ENCODE measurements at regions of chr12 and their contacts with region 1.

Region 1: GRCh38 chr12:31406345-31406744 is 80.4 kb upstream of the SINHCAF start:
- DNase-seq: no peak
- H3K4me3 ChIP-seq: no peak overlapping the region
- H3K27ac ChIP-seq: no peak overlapping the region
- H3K4me1 ChIP-seq: no peaks in the 10 kb centered on the region
- H3K27me3 ChIP-seq: no peaks in the 10 kb centered on the region
- CTCF ChIP-seq: no peak
- EP300 ChIP-seq: no peak
- RAD21 ChIP-seq: no peak

Region 2: DNA sequence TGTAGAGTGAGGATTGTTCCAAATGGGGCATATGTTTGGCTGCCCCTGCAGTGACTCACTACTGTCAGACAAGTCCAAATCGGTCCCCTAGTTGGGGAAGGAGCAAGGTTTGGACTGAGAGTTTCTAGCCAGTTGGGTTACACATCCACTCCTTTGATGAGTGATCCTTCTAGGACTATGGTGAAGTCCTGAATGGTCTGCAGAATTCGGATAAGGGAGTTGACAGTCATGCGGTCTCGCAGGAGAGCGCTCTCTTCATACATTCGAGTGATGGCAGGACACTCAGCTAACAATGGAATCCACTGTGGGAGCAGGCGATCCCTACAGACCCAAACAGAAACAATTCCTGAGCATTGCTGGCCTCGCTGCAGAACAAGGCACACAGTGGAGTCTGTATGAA is 18.9 kb before region 1 on chr12:
- CTCF ChIA-PET with region 1: interaction called, 10 read pairs
- POLR2A ChIA-PET with region 1: no interaction called
- DNase-seq: no peak
- H3K4me3 ChIP-seq: no peak overlapping the region
- H3K27ac ChIP-seq: no peak overlapping the region; a peak in 1 of 4 replicates
- H3K4me1 ChIP-seq: no peaks in the 10 kb centered on the region
- H3K27me3 ChIP-seq: no peaks in the 10 kb centered on the region
- CTCF ChIP-seq: no peak
- EP300 ChIP-seq: no peak
- RAD21 ChIP-seq: no peak

Region 3: DNA sequence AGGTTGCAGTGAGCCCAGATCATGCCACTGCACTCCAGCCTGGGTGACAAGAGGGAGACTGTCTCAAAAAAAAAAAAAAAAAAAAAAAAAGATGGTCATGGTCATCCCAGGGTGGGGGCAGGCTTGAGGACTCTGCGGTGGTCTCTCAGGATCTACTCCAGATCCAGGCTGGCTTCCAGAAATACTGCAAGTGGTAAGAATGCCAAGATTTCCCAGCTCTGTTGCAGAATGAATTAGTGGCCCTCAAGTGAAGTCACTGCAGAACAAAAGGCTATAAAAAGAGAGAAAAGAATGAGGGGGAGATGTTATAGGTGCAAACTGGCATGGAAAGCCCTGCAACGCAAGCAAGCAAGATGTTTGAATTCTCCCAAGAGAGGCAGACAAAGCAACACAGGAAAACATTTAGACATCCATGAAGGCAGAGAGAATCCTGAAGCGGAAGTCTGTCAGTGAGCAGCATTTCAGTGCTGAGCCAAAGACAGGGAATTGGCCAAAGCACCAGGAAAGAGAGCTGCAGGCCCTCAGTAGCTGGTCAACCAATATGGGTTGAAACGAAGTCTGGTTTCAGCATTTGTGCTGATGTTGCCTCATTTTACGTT is 221.2 kb after region 1 on chr12:
- CTCF ChIA-PET with region 1: interaction called, 11 read pairs
- POLR2A ChIA-PET with region 1: no interaction called
- DNase-seq: no peak
- H3K4me3 ChIP-seq: no peak overlapping the region
- H3K27ac ChIP-seq: no peak overlapping the region
- H3K4me1 ChIP-seq: peaks cover 0 to 13% of the 10 kb centered on the region in 2 experiments; a peak in 1 of 4 replicates
- H3K27me3 ChIP-seq: no peaks in the 10 kb centered on the region
- CTCF ChIP-seq: no peak
- EP300 ChIP-seq: no peak
- RAD21 ChIP-seq: no peak

Region 4: DNA sequence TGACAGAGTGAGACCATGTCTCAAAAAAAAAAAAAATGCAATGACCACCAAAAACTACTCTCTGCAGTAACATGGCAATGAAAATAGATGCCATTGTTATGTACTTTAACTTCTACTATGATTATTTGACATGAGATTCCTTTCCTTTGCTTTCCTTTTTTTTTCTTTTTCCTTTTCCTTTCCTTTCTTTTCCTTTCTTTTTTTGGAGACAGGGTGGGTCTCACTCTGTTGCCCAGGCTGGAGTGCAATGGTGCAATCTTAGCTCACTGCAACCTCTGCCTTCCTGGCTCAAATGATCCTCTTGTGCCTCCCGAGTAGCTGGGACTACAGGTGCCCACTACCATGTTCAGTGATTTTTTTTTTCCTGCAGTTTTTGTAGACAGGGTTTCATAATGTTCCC is 228.3 kb after region 1 on chr12:
- CTCF ChIA-PET with region 1: interaction called, 24 read pairs
- POLR2A ChIA-PET with region 1: no interaction called
- DNase-seq: no peak
- H3K4me3 ChIP-seq: no peak overlapping the region
- H3K27ac ChIP-seq: no peak overlapping the region
- H3K4me1 ChIP-seq: peaks cover 0 to 11% of the 10 kb centered on the region in 2 experiments; a peak in 1 of 4 replicates
- H3K27me3 ChIP-seq: no peaks in the 10 kb centered on the region
- CTCF ChIP-seq: no peak
- EP300 ChIP-seq: no peak
- RAD21 ChIP-seq: no peak

Region 5: GRCh38 chr12:31641509-31642090 is 235.3 kb after region 1 on chr12:
- CTCF ChIA-PET with region 1: interaction called, 24 read pairs
- POLR2A ChIA-PET with region 1: no interaction called
- DNase-seq: no peak
- H3K4me3 ChIP-seq: no peak overlapping the region
- H3K27ac ChIP-seq: no peak overlapping the region
- H3K4me1 ChIP-seq: peaks cover 0 to 4% of the 10 kb centered on the region in 2 experiments; a peak in 1 of 4 replicates
- H3K27me3 ChIP-seq: no peaks in the 10 kb centered on the region
- CTCF ChIP-seq: no peak
- EP300 ChIP-seq: no peak
- RAD21 ChIP-seq: no peak

Region 6: GRCh38 chr12:31647086-31647491 is 240.7 kb after region 1 on chr12:
- CTCF ChIA-PET with region 1: interaction called, 20 read pairs
- POLR2A ChIA-PET with region 1: no interaction called
- DNase-seq: peak; percentile 17
- H3K4me3 ChIP-seq: no peak overlapping the region
- H3K27ac ChIP-seq: peak overlapping the region in 1 of 2 experiments; percentile 68; a peak in 2 of 4 replicates
- H3K4me1 ChIP-seq: peaks cover 0 to 15% of the 10 kb centered on the region in 2 experiments; a peak in 2 of 4 replicates
- H3K27me3 ChIP-seq: no peaks in the 10 kb centered on the region
- CTCF ChIP-seq: no peak
- EP300 ChIP-seq: no peak
- RAD21 ChIP-seq: no peak

Measured in SK-N-SH (cell line).